Pancreas (tissue), 10 donors: ENCODE measurements at regions of chr10 and their contacts with region 1.

Region 1: GRCh38 chr10:51001587-51001986 is 72.7 kb upstream of the PRKG1 start:
- DNase-seq: no peak
- ATAC-seq: peak; percentile 60 to 83 (median 79)
- H3K4me3 ChIP-seq: no peak overlapping the region
- H3K27ac ChIP-seq: no peak overlapping the region
- H3K4me1 ChIP-seq: peaks cover 0 to 14% (median 0%) of the 10 kb centered on the region in 3 donors
- H3K27me3 ChIP-seq: no peaks in the 10 kb centered on the region
- CTCF ChIP-seq: peak in 3 of 4 donors; percentile 36 to 51 (median 40)

Region 2: DNA sequence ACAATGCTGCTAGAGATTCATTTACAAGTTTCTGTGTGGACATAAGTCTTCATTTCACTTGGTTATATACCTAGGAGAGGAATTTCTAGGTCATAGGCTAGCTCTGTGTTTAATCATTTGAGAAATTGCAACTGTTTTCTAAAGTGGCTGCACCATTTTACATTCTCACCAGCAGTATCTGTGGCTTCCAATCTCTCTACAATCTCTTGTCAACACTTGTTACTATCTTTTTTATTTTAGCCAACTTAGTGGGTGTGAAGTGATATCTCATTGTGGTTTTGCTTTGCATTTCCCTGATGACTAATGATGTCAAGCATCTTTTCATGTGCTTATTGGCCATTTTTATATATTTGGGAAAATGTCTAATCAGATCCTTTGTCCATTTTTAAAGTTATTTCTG is 1552.7 kb before region 1 on chr10:
- intact Hi-C with region 1: no loop called
- DNase-seq: no peak
- ATAC-seq: no peak
- H3K4me3 ChIP-seq: no peak overlapping the region
- H3K27ac ChIP-seq: no peak overlapping the region
- H3K4me1 ChIP-seq: no peaks in the 10 kb centered on the region
- H3K27me3 ChIP-seq: no peaks in the 10 kb centered on the region
- CTCF ChIP-seq: no peak

Region 3: GRCh38 chr10:51092402-51092801 is 90.8 kb after region 1 on chr10:
- intact Hi-C with region 1: no loop called
- DNase-seq: peak in 4 of 6 donors; percentile 42 to 68 (median 56)
- ATAC-seq: peak; percentile 67 to 87 (median 70)
- H3K4me3 ChIP-seq: no peak overlapping the region
- H3K27ac ChIP-seq: no peak overlapping the region
- H3K4me1 ChIP-seq: peaks cover 0 to 7% (median 0%) of the 10 kb centered on the region in 3 donors
- H3K27me3 ChIP-seq: no peaks in the 10 kb centered on the region
- CTCF ChIP-seq: no peak

Region 4: GRCh38 chr10:51422311-51423120 is 420.9 kb after region 1 on chr10:
- intact Hi-C with region 1: loop called in 1 of 3 experiments (anchors 10 kb)
- DNase-seq: peak in 5 of 6 donors; percentile 30 to 65 (median 48)
- ATAC-seq: peak; percentile 88 to 99 (median 94)
- H3K4me3 ChIP-seq: no peak overlapping the region
- H3K27ac ChIP-seq: no peak overlapping the region
- H3K4me1 ChIP-seq: no peaks in the 10 kb centered on the region
- H3K27me3 ChIP-seq: no peaks in the 10 kb centered on the region
- CTCF ChIP-seq: peak in 3 of 4 donors; percentile 39 to 68 (median 55)